Mammary epithelial cell (primary cell): ENCODE measurements at regions of chr11 and their contacts with region 1.

Region 1: GRCh38 chr11:11608783-11609232 is 13.0 kb downstream of the GALNT18 start:
- DNase-seq: peak; percentile 68
- H3K4me3 ChIP-seq: no peak overlapping the region
- H3K27ac ChIP-seq: peak overlapping the region; percentile 45
- H3K4me1 ChIP-seq: peaks cover 26% of the 10 kb centered on the region
- H3K27me3 ChIP-seq: no peaks in the 10 kb centered on the region
- CTCF ChIP-seq: no peak

Region 2: GRCh38 chr11:11545285-11546275 is 63.2 kb before region 1 on chr11:
- CTCF ChIA-PET with region 1: no interaction called
- dilution Hi-C with region 1: no loop called
- in situ Hi-C with region 1: no loop called
- intact Hi-C with region 1: no loop called
- DNase-seq: no peak
- H3K4me3 ChIP-seq: no peak overlapping the region
- H3K27ac ChIP-seq: no peak overlapping the region
- H3K4me1 ChIP-seq: no peaks in the 10 kb centered on the region
- H3K27me3 ChIP-seq: no peaks in the 10 kb centered on the region
- CTCF ChIP-seq: no peak

Region 3: GRCh38 chr11:11569936-11570491 is 38.8 kb before region 1 on chr11:
- CTCF ChIA-PET with region 1: no interaction called
- dilution Hi-C with region 1: no loop called
- in situ Hi-C with region 1: no loop called
- intact Hi-C with region 1: loop called (anchors 5 kb)
- DNase-seq: peak; percentile 62
- H3K4me3 ChIP-seq: no peak overlapping the region
- H3K27ac ChIP-seq: peak overlapping the region; percentile 85
- H3K4me1 ChIP-seq: peaks cover 38% of the 10 kb centered on the region
- H3K27me3 ChIP-seq: no peaks in the 10 kb centered on the region
- CTCF ChIP-seq: no peak